Activated CD8-positive, alpha-beta T cell treated with anti-CD3 and anti-CD28 coated beads for 36 hours (primary cell): ENCODE measurements at regions of chr5 and their contacts with region 1.

Region 1: DNA sequence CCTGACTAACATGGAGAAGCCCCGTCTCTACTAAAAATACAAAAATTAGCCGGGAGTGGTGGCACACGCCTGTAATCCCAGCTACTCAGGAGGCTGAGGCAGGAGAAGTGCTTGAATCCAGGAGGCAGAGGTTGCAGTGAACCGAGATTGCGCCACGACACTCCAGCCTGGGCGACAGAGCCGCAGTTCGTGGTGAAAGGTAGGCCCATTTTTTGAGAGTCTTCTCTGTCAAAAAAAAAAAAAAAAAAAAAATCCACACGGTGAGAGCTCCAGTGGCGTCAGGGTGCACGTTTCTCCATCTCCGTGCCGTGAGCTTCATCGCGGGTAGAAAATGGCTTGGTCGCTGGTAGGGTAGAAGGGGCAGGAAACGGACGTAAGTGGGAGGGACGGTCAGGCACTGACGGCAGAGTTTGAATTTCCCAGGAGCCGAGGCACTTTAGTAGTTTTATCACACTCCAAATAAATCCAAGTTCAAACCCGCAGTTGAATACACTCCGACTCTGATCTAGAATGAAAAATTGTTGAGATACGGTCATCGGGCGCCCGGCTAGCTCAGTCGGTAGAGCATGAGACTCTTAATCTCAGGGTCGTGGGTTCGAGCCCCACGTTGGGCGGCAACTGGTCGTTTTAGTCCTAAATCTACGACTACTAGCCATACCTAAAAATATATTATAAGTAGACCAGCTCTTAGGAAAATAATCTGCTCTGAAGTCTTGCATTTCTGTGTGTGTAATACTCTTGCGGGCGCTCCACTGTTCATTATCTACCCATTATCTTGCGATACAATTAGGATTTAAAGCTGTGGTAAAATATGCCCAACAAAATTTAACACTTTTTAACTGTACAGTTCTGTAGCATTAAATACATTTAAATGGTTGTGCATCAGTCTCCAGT is 2.5 kb upstream of the TRIM7 start:
- DNase-seq: peak; percentile 95
- ATAC-seq: peak; percentile 62
- H3K4me3 Mint-ChIP-seq: peak overlapping the region; percentile 89
- H3K27ac Mint-ChIP-seq: peak overlapping the region; percentile 92
- H3K4me1 Mint-ChIP-seq: peaks cover 36% of the 10 kb centered on the region
- H3K27me3 Mint-ChIP-seq: peaks cover 28% of the 10 kb centered on the region
- CTCF ChIP-seq: no peak

Region 2: GRCh38 chr5:181184857-181185251 is 22.6 kb before region 1 on chr5:
- CTCF ChIA-PET with region 1: interaction called, 80 read pairs
- POLR2A ChIA-PET with region 1: interaction called, 159 read pairs
- intact Hi-C with region 1: no loop called
- DNase-seq: no peak
- ATAC-seq: no peak
- H3K4me3 Mint-ChIP-seq: peak overlapping the region; percentile 86
- H3K27ac Mint-ChIP-seq: peak overlapping the region; percentile 96
- H3K4me1 Mint-ChIP-seq: peaks cover 28% of the 10 kb centered on the region
- H3K27me3 Mint-ChIP-seq: peaks cover 4% of the 10 kb centered on the region
- CTCF ChIP-seq: no peak

Region 3: DNA sequence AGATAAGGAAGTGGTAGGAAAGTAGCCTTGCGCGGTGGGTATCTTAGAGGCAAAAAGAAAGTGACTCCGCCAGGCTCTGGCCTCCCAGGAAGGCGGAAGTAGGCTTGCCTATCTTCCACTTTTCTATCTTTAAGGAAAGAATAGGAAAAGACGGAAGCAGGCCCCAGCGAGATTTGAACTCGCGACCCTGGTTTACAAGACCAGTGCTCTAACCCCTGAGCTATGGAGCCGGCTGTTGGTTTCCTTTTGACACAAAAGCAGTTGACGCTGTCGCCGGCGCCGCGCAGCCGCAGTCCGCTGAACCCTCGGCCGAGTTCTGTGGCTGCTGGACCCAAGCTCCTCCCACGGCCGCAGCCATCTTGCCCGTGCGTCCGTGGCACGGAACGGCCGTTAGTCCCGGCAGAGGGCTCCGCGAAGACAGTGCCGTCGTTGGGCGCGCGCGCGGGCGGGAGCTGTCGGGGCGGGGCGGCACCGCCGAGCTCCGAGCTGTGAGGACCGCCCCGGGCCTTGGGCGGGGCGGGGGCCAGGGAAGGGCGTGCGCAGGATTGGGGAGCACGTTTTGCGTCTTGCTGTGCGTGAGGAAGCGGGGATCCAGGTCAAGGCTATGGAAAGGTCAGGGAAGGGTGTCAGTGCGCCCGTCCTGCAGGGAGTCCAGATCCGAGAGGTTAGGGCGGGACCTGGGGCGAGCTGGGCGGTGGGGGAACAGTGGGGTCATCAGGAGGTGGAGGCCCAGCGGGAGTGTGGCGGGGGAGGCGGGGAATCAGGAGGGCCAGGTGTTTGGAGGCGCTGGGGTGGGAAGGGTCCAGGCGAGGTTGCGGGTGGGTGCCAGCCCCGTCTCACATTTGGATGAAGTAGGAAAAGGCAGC is 15.7 kb before region 1 on chr5:
- CTCF ChIA-PET with region 1: interaction called, 80 read pairs
- POLR2A ChIA-PET with region 1: interaction called, 159 read pairs
- intact Hi-C with region 1: loop called (anchors 1 kb)
- DNase-seq: peak; percentile 94
- ATAC-seq: peak; percentile 74
- H3K4me3 Mint-ChIP-seq: peak overlapping the region; percentile 91
- H3K27ac Mint-ChIP-seq: peak overlapping the region; percentile 97
- H3K4me1 Mint-ChIP-seq: peaks cover 27% of the 10 kb centered on the region
- H3K27me3 Mint-ChIP-seq: peaks cover 2% of the 10 kb centered on the region
- CTCF ChIP-seq: no peak

Region 4: DNA sequence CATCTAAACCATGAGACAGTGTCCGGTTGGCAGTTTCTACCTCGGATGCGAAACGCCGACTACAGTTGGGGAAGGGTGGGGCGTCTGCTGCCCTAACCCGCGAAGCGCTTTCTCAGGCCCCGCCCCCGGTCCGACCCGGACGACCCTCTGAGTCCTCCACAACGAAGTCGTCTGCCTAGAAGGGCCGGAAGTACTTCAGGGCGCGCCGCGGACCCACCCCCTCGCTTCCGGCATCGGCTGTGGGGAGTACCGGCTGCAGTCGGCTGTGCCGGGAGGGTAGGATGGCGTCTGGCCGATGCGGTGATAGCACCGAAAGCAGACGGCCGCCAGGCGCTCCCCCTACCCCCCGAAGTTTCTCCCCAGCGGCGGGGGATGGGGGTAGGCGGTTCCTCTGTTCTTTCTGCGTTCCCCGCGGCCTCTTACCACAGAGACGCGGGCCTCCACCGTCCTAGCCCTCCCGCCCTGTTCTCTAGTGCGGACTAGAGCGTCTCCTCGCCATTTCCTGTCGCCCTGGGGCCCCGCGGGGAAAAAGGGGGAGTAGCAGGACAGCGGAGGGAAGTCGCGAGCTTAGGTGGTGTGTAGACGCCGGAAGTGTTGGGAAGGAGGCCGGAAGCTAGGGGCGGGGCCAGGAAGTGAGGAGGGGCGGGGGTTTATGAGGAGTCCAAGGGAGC is 15.7 kb after region 1 on chr5 and contains the start of gene TRIM41:
- CTCF ChIA-PET with region 1: interaction called, 6 read pairs
- POLR2A ChIA-PET with region 1: interaction called, 25 read pairs
- intact Hi-C with region 1: loop called (anchors 1 kb)
- DNase-seq: peak; percentile 99
- ATAC-seq: peak; percentile 64
- H3K4me3 Mint-ChIP-seq: peak within 1 kb of the TSS; percentile 91
- H3K27ac Mint-ChIP-seq: peak within 1 kb of the TSS; percentile 97
- H3K4me1 Mint-ChIP-seq: peaks cover 48% of the 10 kb centered on the region
- H3K27me3 Mint-ChIP-seq: peaks cover 5% of the 10 kb centered on the region
- CTCF ChIP-seq: no peak
- total RNA-seq, gene TRIM41: 30.6 to 31.5 TPM

Region 5: DNA sequence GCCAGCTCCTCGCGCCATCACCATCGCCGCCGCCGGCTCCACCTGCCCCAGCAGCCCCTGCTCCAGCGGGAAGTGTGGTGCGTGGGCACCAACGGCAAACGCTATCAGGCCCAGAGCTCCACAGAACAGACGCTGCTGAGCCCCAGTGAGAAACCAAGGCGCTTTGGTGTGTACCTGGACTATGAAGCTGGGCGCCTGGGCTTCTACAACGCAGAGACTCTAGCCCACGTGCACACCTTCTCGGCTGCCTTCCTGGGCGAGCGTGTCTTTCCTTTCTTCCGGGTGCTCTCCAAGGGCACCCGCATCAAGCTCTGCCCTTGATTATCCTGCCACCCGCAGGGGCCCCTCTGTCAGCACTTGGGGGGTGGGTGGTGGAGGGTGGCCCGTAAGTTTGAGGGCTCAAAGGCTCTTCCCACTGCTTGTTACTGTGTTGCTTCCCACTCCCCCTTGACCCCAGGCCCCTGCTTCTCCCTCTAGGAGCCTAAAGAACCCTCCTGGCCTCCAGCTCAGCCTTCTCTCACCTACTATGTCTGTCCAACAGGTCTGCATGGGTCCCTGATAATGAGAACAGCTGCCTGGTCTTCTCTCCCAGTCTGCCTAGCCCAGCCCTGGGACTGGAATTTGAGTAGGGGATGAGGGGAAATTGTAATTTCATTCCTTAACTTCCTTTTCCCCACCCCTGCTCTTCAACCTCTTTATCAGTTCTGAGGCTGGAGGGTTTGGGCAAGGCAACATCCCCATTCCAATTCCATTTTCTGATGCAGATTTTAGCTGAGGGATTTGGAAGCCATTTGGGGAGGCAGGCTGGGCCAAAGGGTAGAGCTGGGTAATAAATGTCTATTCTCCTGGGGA is 27.2 kb after region 1 on chr5:
- CTCF ChIA-PET with region 1: interaction called, 5 read pairs
- POLR2A ChIA-PET with region 1: interaction called, 34 read pairs
- intact Hi-C with region 1: no loop called
- DNase-seq: no peak
- ATAC-seq: peak; percentile 13
- H3K4me3 Mint-ChIP-seq: no peak overlapping the region
- H3K27ac Mint-ChIP-seq: peak overlapping the region; percentile 68
- H3K4me1 Mint-ChIP-seq: peaks cover 32% of the 10 kb centered on the region
- H3K27me3 Mint-ChIP-seq: no peaks in the 10 kb centered on the region
- CTCF ChIP-seq: no peak

Region 6: GRCh38 chr5:181243512-181244343 is 36.3 kb after region 1 on chr5 and contains the start of gene RACK1:
- CTCF ChIA-PET with region 1: interaction called, 3 read pairs
- POLR2A ChIA-PET with region 1: interaction called, 34 read pairs
- intact Hi-C with region 1: no loop called
- DNase-seq: peak; percentile 94
- ATAC-seq: peak; percentile 68
- H3K4me3 Mint-ChIP-seq: peak within 1 kb of the TSS; percentile 99
- H3K27ac Mint-ChIP-seq: peak within 1 kb of the TSS; percentile 100
- H3K4me1 Mint-ChIP-seq: peaks cover 42% of the 10 kb centered on the region
- H3K27me3 Mint-ChIP-seq: no peaks in the 10 kb centered on the region
- CTCF ChIP-seq: no peak
- total RNA-seq, gene RACK1: 2,759 to 2,801 TPM